ENCODE measurements at regions of chr11 and their contacts with region 1.

Region 1: GRCh38 chr11:108112057-108112456 is 9.3 kb upstream of the ACAT1 start:
- DNase-seq: no peak
- ATAC-seq: no peak
- H3K4me3 Mint-ChIP-seq: no peak overlapping the region
- H3K27ac Mint-ChIP-seq: no peak overlapping the region
- H3K4me1 Mint-ChIP-seq: peaks cover 10% of the 10 kb centered on the region
- H3K27me3 Mint-ChIP-seq: no peaks in the 10 kb centered on the region
- CTCF ChIP-seq: no peak

Region 2: GRCh38 chr11:108093128-108093904 is 18.7 kb before region 1 on chr11:
- CTCF ChIA-PET with region 1: no interaction called
- POLR2A ChIA-PET with region 1: interaction called, 11 read pairs
- DNase-seq: no peak
- ATAC-seq: no peak
- H3K4me3 Mint-ChIP-seq: no peak overlapping the region
- H3K27ac Mint-ChIP-seq: no peak overlapping the region
- H3K4me1 Mint-ChIP-seq: no peaks in the 10 kb centered on the region
- H3K27me3 Mint-ChIP-seq: no peaks in the 10 kb centered on the region
- CTCF ChIP-seq: no peak